AG04449 (cell line): ENCODE measurements at regions of chr20 and their contacts with region 1.

Region 1: GRCh38 chr20:49489688-49490087 is 7.2 kb upstream of the KCNB1 start:
- DNase-seq: no peak
- H3K4me3 ChIP-seq: no peak overlapping the region
- CTCF ChIP-seq: no peak

Region 2: GRCh38 chr20:49328790-49329189 is 160.9 kb before region 1 on chr20:
- CTCF ChIA-PET with region 1: interaction called, 241 read pairs
- POLR2A ChIA-PET with region 1: no interaction called
- DNase-seq: no peak
- H3K4me3 ChIP-seq: no peak overlapping the region
- CTCF ChIP-seq: no peak

Region 3: DNA sequence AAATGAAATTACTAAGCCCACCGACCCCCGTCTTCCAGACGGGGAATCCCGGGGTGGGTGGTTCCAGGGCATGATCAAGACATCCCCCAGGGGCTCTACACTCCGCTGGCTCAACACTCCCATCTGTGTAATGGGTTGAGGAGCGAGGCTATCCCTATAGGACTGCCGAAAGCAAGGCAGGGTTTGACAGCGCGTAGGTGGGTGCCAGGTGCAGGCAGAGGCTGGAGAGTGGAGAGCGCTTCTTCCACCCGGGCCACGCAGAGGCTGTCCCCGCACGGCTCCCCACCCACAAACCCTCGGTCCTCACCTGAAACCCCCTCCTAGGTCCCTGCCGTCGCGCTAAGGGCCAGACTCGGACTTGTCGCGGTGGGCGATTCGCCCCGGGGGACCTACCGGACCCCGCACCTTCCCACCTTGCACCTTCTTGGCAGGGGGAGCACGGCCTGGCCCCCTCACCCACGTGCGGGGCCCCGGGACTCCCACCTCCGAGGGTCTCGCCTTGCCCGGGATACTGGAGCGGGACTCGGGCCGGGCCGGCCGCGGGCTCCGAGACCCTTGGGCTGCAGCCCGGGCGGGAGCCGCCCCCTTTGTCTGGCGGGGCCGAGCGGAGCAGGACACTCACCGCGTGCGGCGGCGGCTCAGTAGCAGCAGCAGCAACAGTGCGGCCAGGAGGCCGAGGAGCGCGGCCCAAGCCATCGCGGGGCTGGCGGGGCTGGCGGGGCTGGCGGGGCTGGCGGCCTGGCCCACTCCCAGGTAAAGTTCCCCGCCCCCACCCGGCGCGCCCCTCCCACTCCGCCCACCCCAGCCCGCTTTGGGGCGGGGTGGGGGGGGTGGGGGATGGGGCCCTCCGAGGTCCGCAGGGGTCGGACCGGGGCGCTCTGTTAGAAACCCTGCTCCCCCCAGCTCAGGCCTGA is 78.0 kb after region 1 on chr20 and contains the start of gene PTGIS:
- CTCF ChIA-PET with region 1: no interaction called
- POLR2A ChIA-PET with region 1: no interaction called
- DNase-seq: no peak
- H3K4me3 ChIP-seq: peak within 1 kb of the TSS; percentile 62
- CTCF ChIP-seq: no peak

Region 4: GRCh38 chr20:49668181-49668877 is 178.6 kb after region 1 on chr20:
- CTCF ChIA-PET with region 1: no interaction called
- POLR2A ChIA-PET with region 1: no interaction called
- DNase-seq: no peak
- H3K4me3 ChIP-seq: no peak overlapping the region
- CTCF ChIP-seq: no peak

Region 5: GRCh38 chr20:50467718-50468356 is 978.1 kb after region 1 on chr20:
- CTCF ChIA-PET with region 1: no interaction called
- POLR2A ChIA-PET with region 1: no interaction called
- DNase-seq: no peak
- H3K4me3 ChIP-seq: no peak overlapping the region
- CTCF ChIP-seq: no peak